ENCODE measurements at regions of chr2 and their contacts with region 1.

Region 1: GRCh38 chr2:106542811-106543259 is 55.7 kb downstream of the CD8B2 start:
- DNase-seq: peak; percentile 59 to 72
- ATAC-seq: peak; percentile 89 to 98
- H3K4me3 ChIP-seq: peak overlapping the region; percentile 41
- H3K27ac ChIP-seq: peak overlapping the region; percentile 54 to 62; a peak in 4 of 6 replicates
- H3K4me1 ChIP-seq: no peaks in the 10 kb centered on the region
- CTCF ChIP-seq: peak; percentile 89
- EP300 ChIP-seq: no peak
- POLR2A ChIP-seq: no peak
- RAD21 ChIP-seq: peak; percentile 92 to 94

Region 2: GRCh38 chr2:106104332-106105062 is 438.3 kb before region 1 on chr2:
- CTCF ChIA-PET with region 1: interaction called, 11 read pairs
- POLR2A ChIA-PET with region 1: no interaction called
- DNase-seq: peak; percentile 69 to 75
- ATAC-seq: peak; percentile 67 to 90; a peak in 4 of 6 replicates
- H3K4me3 ChIP-seq: no peak overlapping the region
- H3K27ac ChIP-seq: no peak overlapping the region
- H3K4me1 ChIP-seq: peaks cover 4% of the 10 kb centered on the region; the same call in 2 of the 3 replicates
- CTCF ChIP-seq: peak; percentile 94
- EP300 ChIP-seq: no peak
- POLR2A ChIP-seq: no peak
- RAD21 ChIP-seq: peak; percentile 94 to 96

Region 3: DNA sequence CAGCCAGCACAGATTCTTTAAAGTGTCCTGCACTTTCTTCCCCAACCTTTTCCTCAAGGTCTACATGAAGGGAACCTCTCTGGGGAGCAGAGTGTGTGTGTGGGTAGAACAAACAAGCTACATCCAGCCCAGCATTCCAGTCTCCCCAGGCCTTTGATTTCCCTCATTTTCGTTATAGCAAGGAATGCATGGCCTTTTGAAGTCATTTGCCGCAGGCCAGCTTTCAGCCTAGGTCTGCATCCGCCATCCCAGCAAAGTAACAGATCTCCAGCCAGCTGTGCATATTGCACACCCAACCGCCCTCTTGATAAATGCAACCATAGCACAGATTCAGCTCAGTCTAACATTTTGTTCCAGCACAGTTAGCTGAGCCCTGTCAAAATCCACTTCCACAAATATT is 11.1 kb before region 1 on chr2:
- CTCF ChIA-PET with region 1: interaction called, 19 read pairs
- POLR2A ChIA-PET with region 1: no interaction called
- DNase-seq: no peak
- ATAC-seq: no peak
- H3K4me3 ChIP-seq: no peak overlapping the region
- H3K27ac ChIP-seq: no peak overlapping the region
- H3K4me1 ChIP-seq: no peaks in the 10 kb centered on the region
- CTCF ChIP-seq: no peak
- EP300 ChIP-seq: no peak
- POLR2A ChIP-seq: no peak
- RAD21 ChIP-seq: no peak

Region 4: DNA sequence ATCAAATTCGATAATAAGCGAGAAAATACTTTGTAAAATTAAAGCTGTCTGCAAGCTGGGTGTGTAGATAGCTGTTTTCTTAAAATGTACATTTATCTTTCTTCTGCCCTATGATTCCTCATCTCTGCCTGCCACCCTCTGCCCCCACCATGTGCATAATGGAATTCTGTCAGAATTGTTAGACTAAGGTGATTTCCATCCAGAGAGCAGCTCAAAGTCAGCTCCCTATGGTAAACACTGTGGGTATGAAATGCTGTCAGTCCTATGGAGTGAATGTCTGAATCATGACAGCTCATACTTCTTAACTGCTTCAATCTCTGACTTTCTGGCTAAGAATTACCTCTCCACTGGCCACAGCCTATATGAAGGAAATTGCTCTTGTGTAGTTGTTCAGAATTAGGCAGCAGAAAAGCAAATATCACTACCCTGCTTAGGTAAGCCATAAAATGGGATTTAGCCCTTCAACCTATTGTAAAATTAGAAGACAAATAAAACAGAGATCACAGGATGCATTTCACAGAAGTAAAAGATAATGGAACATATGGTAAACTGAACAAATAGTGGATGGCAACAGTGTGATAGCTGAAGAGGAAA is 82.0 kb after region 1 on chr2:
- CTCF ChIA-PET with region 1: no interaction called
- POLR2A ChIA-PET with region 1: no interaction called
- DNase-seq: no peak
- ATAC-seq: no peak
- H3K4me3 ChIP-seq: no peak overlapping the region
- H3K27ac ChIP-seq: no peak overlapping the region
- H3K4me1 ChIP-seq: no peaks in the 10 kb centered on the region
- CTCF ChIP-seq: no peak
- EP300 ChIP-seq: no peak
- POLR2A ChIP-seq: no peak
- RAD21 ChIP-seq: no peak

Region 5: GRCh38 chr2:106638043-106638442 is 95.2 kb after region 1 on chr2:
- CTCF ChIA-PET with region 1: no interaction called
- POLR2A ChIA-PET with region 1: no interaction called
- DNase-seq: peak in 1 of 2 experiments; percentile 39
- ATAC-seq: peak; percentile 54 to 69; a peak in 5 of 6 replicates
- H3K4me3 ChIP-seq: no peak overlapping the region
- H3K27ac ChIP-seq: no peak overlapping the region
- H3K4me1 ChIP-seq: peaks cover 19% of the 10 kb centered on the region
- CTCF ChIP-seq: peak; percentile 69
- EP300 ChIP-seq: no peak
- POLR2A ChIP-seq: no peak
- RAD21 ChIP-seq: peak; percentile 68 to 86